ENCODE measurements at regions of chr14 and their contacts with region 1.

Region 1: DNA sequence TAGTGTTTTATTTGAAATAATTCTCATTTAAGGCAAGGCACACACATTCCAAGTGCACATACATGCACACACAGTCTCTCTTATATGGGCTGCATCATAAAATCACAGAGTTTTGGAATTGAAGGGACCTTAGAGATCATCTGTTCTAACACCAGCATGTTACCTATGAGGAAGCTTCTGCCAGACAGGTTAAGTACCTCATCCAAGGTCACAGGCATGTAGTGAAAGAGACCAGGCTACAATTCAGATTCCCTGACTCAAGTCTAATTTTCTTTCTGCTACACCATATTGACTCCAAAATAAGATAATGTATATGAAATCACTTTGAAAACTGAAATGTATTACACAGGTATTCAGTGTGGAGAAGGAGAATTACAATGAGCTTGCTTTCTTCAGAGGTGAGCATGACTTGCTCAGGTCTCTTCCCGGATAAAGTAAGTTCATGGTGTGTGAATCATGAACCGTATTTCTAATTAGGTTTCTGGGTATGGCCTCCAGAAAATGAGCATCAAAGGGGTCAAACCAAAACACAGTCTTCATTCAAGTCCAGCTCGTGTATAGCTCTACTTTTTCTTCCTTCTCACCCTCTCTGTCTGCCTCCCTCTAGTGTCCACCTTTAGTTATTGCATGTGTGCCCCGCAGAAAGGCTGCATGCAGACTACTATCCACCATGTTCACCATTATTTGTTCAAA is 411.9 kb downstream of the FUT8 start:
- DNase-seq: peak; percentile 70
- ATAC-seq: peak; percentile 80
- H3K4me3 Mint-ChIP-seq: no peak overlapping the region
- H3K27ac Mint-ChIP-seq: no peak overlapping the region
- H3K4me1 Mint-ChIP-seq: peaks cover 7% of the 10 kb centered on the region
- H3K27me3 Mint-ChIP-seq: no peaks in the 10 kb centered on the region

Region 2: DNA sequence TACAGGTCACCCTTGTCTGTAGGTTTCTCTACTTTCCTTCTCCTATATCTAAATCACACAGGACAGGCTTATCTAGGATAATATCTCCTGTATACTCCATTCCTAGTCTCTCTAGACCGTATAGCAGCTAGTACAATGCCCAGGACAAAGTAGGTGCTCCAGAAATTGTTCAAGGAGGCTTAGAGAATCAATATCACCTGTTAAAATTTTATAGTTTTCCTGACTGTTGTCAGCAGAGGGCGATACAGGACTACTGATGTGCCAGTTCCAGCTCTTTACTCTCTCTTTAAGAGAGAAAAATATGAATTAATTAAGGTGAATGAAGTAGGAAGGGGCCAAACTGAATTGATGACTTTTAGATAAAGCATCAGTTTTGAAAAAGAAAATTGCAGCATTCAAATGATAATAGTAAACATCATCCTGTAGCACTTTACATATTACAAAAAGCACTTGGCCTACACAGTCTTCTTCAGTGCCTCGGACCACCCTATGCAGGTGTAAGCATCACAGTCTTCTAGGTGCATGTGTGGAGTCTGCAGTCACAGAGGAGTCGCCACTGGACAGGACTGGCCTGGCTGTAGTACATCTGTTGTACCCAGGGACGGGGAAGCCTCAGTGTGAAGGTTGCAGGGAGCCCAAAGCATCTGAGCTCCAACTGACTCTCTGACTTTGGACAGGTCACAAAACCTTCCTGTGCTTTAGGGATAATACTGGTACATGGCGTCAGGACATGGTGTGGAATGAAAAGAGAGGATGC is 660.2 kb before region 1 on chr14:
- CTCF ChIA-PET with region 1: interaction called, 24 read pairs
- POLR2A ChIA-PET with region 1: no interaction called
- intact Hi-C with region 1: loop called (anchors 1 to 2 kb)
- DNase-seq: peak; percentile 56
- ATAC-seq: peak; percentile 60
- H3K4me3 Mint-ChIP-seq: no peak overlapping the region
- H3K27ac Mint-ChIP-seq: no peak overlapping the region
- H3K4me1 Mint-ChIP-seq: peaks cover 14% of the 10 kb centered on the region
- H3K27me3 Mint-ChIP-seq: no peaks in the 10 kb centered on the region

Region 3: DNA sequence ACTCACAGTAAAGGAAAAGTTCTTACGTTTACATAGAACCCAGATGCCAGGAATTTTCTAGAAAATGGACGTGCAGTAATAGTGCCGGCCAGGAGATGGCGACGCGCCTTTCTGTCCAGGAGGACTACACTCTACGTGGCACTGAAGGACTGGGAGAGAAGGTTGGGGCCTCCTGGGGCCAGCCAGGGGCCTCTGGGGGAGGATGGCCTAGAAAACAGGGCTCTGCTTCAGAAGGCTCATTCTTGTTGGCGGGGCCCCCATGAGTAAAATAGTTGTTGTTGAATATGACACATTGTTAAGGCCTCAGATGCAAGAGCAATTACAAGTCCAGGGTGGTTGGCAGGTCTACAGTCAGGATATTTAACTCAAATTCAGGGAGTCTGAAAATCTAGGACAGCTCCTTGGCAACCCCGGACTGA is 602.0 kb before region 1 on chr14:
- CTCF ChIA-PET with region 1: no interaction called
- POLR2A ChIA-PET with region 1: no interaction called
- intact Hi-C with region 1: loop called in 1 of 2 experiments (anchors 1 kb)
- DNase-seq: peak; percentile 78
- ATAC-seq: peak; percentile 96
- H3K4me3 Mint-ChIP-seq: no peak overlapping the region
- H3K27ac Mint-ChIP-seq: peak overlapping the region; percentile 51
- H3K4me1 Mint-ChIP-seq: peaks cover 32% of the 10 kb centered on the region
- H3K27me3 Mint-ChIP-seq: no peaks in the 10 kb centered on the region

Region 4: DNA sequence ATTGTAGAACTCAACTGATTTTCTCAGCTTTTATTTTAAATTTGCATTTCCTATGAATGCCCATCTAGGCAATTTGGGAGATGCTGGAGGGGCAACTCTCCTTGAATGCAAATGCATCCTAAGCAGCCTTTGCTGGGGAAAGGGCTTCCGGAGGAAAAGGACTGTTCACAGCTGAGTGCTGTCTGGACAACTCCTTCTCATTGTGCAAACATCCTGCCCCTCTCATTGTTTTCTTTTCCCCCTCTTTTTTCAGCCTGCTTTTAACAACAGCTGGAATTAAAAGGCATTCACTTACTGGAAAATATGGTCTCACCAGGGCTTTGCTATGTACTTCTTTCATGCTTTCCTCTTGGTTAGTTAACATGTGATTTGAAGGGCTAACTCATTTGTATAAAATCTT is 14.1 kb before region 1 on chr14:
- CTCF ChIA-PET with region 1: interaction called, 17 read pairs
- POLR2A ChIA-PET with region 1: no interaction called
- intact Hi-C with region 1: no loop called
- DNase-seq: no peak
- ATAC-seq: no peak
- H3K4me3 Mint-ChIP-seq: no peak overlapping the region
- H3K27ac Mint-ChIP-seq: no peak overlapping the region
- H3K4me1 Mint-ChIP-seq: no peaks in the 10 kb centered on the region
- H3K27me3 Mint-ChIP-seq: no peaks in the 10 kb centered on the region

Region 5: GRCh38 chr14:66070509-66071319 is 246.3 kb after region 1 on chr14:
- CTCF ChIA-PET with region 1: interaction called, 4 read pairs
- POLR2A ChIA-PET with region 1: no interaction called
- intact Hi-C with region 1: loop called (anchors 5 to 10 kb)
- DNase-seq: peak; percentile 79
- ATAC-seq: peak; percentile 63
- H3K4me3 Mint-ChIP-seq: no peak overlapping the region
- H3K27ac Mint-ChIP-seq: no peak overlapping the region
- H3K4me1 Mint-ChIP-seq: no peaks in the 10 kb centered on the region
- H3K27me3 Mint-ChIP-seq: no peaks in the 10 kb centered on the region

Region 6: GRCh38 chr14:66152747-66153146 is 328.3 kb after region 1 on chr14:
- CTCF ChIA-PET with region 1: no interaction called
- POLR2A ChIA-PET with region 1: no interaction called
- intact Hi-C with region 1: no loop called
- DNase-seq: no peak
- ATAC-seq: no peak
- H3K4me3 Mint-ChIP-seq: no peak overlapping the region
- H3K27ac Mint-ChIP-seq: no peak overlapping the region
- H3K4me1 Mint-ChIP-seq: no peaks in the 10 kb centered on the region
- H3K27me3 Mint-ChIP-seq: no peaks in the 10 kb centered on the region